GM12878 (cell line): ENCODE measurements at regions of chr14 and their contacts with region 1.

Region 1: DNA sequence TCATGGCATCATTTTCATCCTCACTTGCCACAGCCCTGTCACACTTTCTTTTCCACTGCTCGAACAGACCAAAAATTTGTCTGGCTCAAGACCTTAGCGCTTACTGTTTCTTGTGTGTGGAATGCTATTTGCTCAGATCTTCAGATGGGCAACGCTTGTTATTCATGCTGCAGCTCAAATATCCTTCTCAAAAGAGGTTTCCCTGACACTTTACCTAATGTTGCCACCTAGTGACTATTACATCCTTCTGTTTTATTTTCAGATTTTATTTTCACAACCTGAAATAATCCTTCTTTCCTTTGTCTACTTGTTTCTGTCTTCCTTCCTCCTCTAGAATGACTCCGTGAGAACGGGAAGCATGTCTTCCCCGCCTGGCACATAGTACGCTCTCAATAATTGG is 5.6 kb downstream of the FBXO33 start:
- DNase-seq: no peak
- ATAC-seq: peak; percentile 15
- H3K4me3 ChIP-seq: peak overlapping the region; percentile 45
- H3K27ac ChIP-seq: peak overlapping the region; percentile 55
- H3K4me1 ChIP-seq: peaks cover 13% of the 10 kb centered on the region
- H3K27me3 ChIP-seq: no peaks in the 10 kb centered on the region
- CTCF ChIP-seq: peak; percentile 28 to 53 (median 39); a peak in 4 of 6 replicates
- EP300 ChIP-seq: no peak
- POLR2A ChIP-seq: no peak
- RAD21 ChIP-seq: peak; percentile 65

Region 2: GRCh38 chr14:38808734-38809462 is 617.7 kb before region 1 on chr14:
- CTCF ChIA-PET with region 1: no interaction called
- POLR2A ChIA-PET with region 1: no interaction called
- RAD21 ChIA-PET with region 1: no interaction called
- SMC1A ChIA-PET with region 1: no interaction called
- in situ Hi-C with region 1: no loop called
- intact Hi-C with region 1: no loop called
- DNase-seq: no peak
- ATAC-seq: no peak
- H3K4me3 ChIP-seq: no peak overlapping the region
- H3K27ac ChIP-seq: no peak overlapping the region
- H3K4me1 ChIP-seq: no peaks in the 10 kb centered on the region
- H3K27me3 ChIP-seq: no peaks in the 10 kb centered on the region
- CTCF ChIP-seq: no peak
- EP300 ChIP-seq: no peak
- POLR2A ChIP-seq: no peak
- RAD21 ChIP-seq: no peak

Region 3: GRCh38 chr14:39102969-39103957 is 323.3 kb before region 1 on chr14 and contains the start of gene SEC23A:
- CTCF ChIA-PET with region 1: interaction called, 23 read pairs
- POLR2A ChIA-PET with region 1: interaction called, 4 read pairs
- RAD21 ChIA-PET with region 1: interaction called, 5 read pairs
- SMC1A ChIA-PET with region 1: interaction called, 9 read pairs
- in situ Hi-C with region 1: loop called (anchors 5 kb)
- intact Hi-C with region 1: loop called (anchors 2 kb)
- DNase-seq: no peak
- ATAC-seq: peak; percentile 97
- H3K4me3 ChIP-seq: peak within 1 kb of the TSS; percentile 84
- H3K27ac ChIP-seq: peak within 1 kb of the TSS; percentile 73
- H3K4me1 ChIP-seq: peaks cover 6% of the 10 kb centered on the region; the same call in 1 of the 2 replicates
- H3K27me3 ChIP-seq: no peaks in the 10 kb centered on the region
- CTCF ChIP-seq: no peak
- EP300 ChIP-seq: no peak
- POLR2A ChIP-seq: peak; percentile 98
- RAD21 ChIP-seq: no peak
- polyA plus RNA-seq, gene SEC23A: 13.6 to 15.2 TPM

Region 4: GRCh38 chr14:39232554-39233415 is 193.8 kb before region 1 on chr14:
- CTCF ChIA-PET with region 1: interaction called, 93 read pairs
- POLR2A ChIA-PET with region 1: interaction called, 3 read pairs
- RAD21 ChIA-PET with region 1: interaction called, 22 read pairs
- SMC1A ChIA-PET with region 1: interaction called, 44 read pairs
- in situ Hi-C with region 1: no loop called
- intact Hi-C with region 1: loop called (anchors 1 kb)
- DNase-seq: no peak
- ATAC-seq: peak; percentile 65
- H3K4me3 ChIP-seq: no peak overlapping the region
- H3K27ac ChIP-seq: no peak overlapping the region
- H3K4me1 ChIP-seq: no peaks in the 10 kb centered on the region
- H3K27me3 ChIP-seq: no peaks in the 10 kb centered on the region
- CTCF ChIP-seq: no peak; a peak in 1 of 6 replicates
- EP300 ChIP-seq: no peak
- POLR2A ChIP-seq: no peak
- RAD21 ChIP-seq: 0 out of 2 replicates have a peak, but pooled peaks have one; percentile 19

Region 5: DNA sequence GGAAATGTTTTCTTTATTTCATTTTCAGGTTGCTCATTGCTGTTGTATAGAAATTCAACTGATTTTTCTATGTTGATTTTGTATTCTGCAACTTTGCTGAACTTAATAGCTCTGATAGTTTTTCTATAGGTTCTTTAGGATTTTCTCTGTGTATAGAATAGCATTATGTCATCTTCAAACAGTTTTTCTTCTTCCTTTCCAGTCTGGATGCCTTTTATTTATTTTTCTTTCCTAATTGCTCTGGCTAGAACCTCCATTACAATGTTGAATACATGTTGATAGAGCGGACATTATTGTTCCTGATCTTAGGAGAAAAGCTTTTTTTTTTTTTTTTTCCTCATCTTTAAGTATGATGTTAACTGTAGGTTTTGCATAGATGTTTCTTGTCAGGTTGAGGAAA is 153.7 kb before region 1 on chr14:
- CTCF ChIA-PET with region 1: interaction called, 3 read pairs
- POLR2A ChIA-PET with region 1: interaction called, 4 read pairs
- RAD21 ChIA-PET with region 1: interaction called, 16 read pairs
- SMC1A ChIA-PET with region 1: interaction called, 9 read pairs
- in situ Hi-C with region 1: loop called (anchors 5 kb)
- intact Hi-C with region 1: no loop called
- DNase-seq: no peak
- ATAC-seq: no peak
- H3K4me3 ChIP-seq: no peak overlapping the region
- H3K27ac ChIP-seq: no peak overlapping the region
- H3K4me1 ChIP-seq: peaks cover 5% of the 10 kb centered on the region
- H3K27me3 ChIP-seq: no peaks in the 10 kb centered on the region
- CTCF ChIP-seq: no peak
- EP300 ChIP-seq: no peak
- POLR2A ChIP-seq: no peak
- RAD21 ChIP-seq: no peak

Region 6: DNA sequence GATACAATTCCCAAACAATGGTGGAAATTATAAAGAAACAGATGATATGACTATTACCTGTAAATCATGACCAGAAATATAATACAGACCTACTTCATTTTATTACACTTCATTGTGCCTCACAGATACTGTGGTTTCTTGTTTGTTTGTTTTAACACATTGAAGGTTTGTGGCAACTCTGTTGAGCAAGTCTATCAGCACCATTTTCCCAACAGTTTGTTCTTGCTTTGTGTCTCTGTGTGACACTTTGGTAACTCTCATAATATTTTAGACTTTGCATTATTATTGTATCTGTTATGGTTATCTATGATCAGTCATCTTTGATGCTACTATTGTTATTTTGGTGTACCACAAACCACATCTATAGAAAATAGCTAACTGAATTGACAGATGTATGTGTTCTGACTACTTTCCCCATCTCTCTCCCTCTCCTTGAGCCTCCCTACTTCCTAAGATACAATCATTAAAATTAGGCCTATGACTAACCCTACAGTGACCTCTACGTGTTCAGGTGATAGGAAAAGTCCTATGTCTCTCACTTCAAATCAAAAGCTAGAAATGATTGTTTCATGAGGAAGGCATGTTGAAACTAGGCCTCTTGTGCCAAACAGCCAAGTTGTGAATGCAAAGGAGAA is 43.5 kb before region 1 on chr14:
- CTCF ChIA-PET with region 1: interaction called, 5 read pairs
- POLR2A ChIA-PET with region 1: no interaction called
- RAD21 ChIA-PET with region 1: interaction called, 3 read pairs
- SMC1A ChIA-PET with region 1: interaction called, 16 read pairs
- in situ Hi-C with region 1: no loop called
- intact Hi-C with region 1: no loop called
- DNase-seq: no peak
- ATAC-seq: peak; percentile 75
- H3K4me3 ChIP-seq: no peak overlapping the region
- H3K27ac ChIP-seq: no peak overlapping the region
- H3K4me1 ChIP-seq: no peaks in the 10 kb centered on the region
- H3K27me3 ChIP-seq: no peaks in the 10 kb centered on the region
- CTCF ChIP-seq: no peak
- EP300 ChIP-seq: no peak
- POLR2A ChIP-seq: no peak
- RAD21 ChIP-seq: no peak

Region 7: DNA sequence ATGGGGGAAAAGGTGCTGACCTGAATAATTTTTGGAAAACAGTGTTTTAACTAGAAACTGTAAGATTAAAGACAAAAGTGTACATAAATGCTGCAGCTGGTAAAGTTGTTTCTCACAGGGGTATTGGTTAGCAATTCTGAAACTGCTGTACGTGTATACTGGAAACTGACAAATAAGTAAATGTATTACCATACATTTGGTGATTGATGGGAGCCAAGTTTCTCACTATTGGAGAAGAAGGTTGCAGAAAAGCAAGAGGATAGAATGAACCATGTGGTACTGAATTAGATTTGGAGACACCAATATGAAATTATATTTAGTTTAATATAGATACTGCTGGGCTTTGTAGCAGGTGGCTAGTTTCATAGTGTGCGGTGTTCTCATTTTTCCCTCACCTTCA is 25.2 kb after region 1 on chr14:
- CTCF ChIA-PET with region 1: interaction called, 22 read pairs
- POLR2A ChIA-PET with region 1: interaction called, 159 read pairs
- RAD21 ChIA-PET with region 1: interaction called, 159 read pairs
- SMC1A ChIA-PET with region 1: interaction called, 182 read pairs
- in situ Hi-C with region 1: no loop called
- intact Hi-C with region 1: no loop called
- DNase-seq: no peak
- ATAC-seq: peak; percentile 70
- H3K4me3 ChIP-seq: no peak overlapping the region
- H3K27ac ChIP-seq: peak overlapping the region; percentile 48; the same call in 1 of the 2 replicates
- H3K4me1 ChIP-seq: peaks cover 40% of the 10 kb centered on the region
- H3K27me3 ChIP-seq: no peaks in the 10 kb centered on the region
- CTCF ChIP-seq: no peak
- EP300 ChIP-seq: no peak
- POLR2A ChIP-seq: no peak
- RAD21 ChIP-seq: no peak

Region 8: GRCh38 chr14:39469094-39469710 is 42.6 kb after region 1 on chr14:
- CTCF ChIA-PET with region 1: interaction called, 100 read pairs
- POLR2A ChIA-PET with region 1: interaction called, 18 read pairs
- RAD21 ChIA-PET with region 1: interaction called, 101 read pairs
- SMC1A ChIA-PET with region 1: interaction called, 92 read pairs
- in situ Hi-C with region 1: no loop called
- intact Hi-C with region 1: no loop called
- DNase-seq: no peak
- ATAC-seq: peak; percentile 97
- H3K4me3 ChIP-seq: no peak overlapping the region
- H3K27ac ChIP-seq: no peak overlapping the region
- H3K4me1 ChIP-seq: no peaks in the 10 kb centered on the region
- H3K27me3 ChIP-seq: no peaks in the 10 kb centered on the region
- CTCF ChIP-seq: peak; percentile 76 to 90 (median 78)
- EP300 ChIP-seq: no peak
- POLR2A ChIP-seq: no peak
- RAD21 ChIP-seq: peak; percentile 95

Region 9: DNA sequence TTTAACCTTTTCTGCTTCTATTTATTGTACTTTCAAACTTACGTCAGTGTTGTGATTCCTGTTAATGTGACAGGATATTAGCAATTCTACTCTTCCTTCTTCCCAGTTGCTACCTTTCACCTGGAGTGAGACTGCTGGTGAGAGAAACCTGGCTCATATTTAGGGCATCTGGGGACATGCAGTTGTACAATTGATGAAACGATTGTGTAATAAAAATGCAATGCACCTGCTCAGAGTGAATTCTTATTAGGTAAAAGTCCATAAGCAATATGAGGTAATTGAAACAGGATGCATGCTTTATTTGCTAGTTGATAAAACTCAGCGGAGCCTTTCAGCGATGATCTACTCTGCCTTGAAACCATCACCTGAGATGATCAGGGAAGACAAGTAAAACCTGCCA is 121.8 kb after region 1 on chr14:
- CTCF ChIA-PET with region 1: no interaction called
- POLR2A ChIA-PET with region 1: no interaction called
- RAD21 ChIA-PET with region 1: no interaction called
- SMC1A ChIA-PET with region 1: no interaction called
- in situ Hi-C with region 1: no loop called
- intact Hi-C with region 1: no loop called
- DNase-seq: no peak
- ATAC-seq: no peak
- H3K4me3 ChIP-seq: no peak overlapping the region
- H3K27ac ChIP-seq: no peak overlapping the region
- H3K4me1 ChIP-seq: no peaks in the 10 kb centered on the region
- H3K27me3 ChIP-seq: no peaks in the 10 kb centered on the region
- CTCF ChIP-seq: no peak
- EP300 ChIP-seq: no peak
- POLR2A ChIP-seq: no peak
- RAD21 ChIP-seq: no peak

Region 10: DNA sequence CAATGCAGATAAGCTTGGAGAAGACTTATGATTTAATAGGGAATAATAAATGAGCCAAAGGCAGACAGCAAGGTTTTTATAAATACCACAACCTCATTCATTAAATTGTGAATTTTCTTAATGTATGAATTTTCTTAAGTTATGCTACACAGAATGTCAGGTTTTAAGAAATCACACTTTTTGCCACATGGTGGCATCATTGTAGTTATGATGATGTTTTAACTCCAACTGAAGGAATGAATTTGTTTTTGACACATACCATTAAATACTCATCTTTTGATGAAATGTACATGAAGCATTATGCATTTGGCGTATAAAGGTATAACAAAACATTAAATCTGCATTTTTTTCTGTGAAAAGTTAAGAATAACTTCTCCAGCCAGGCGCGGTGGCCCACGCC is 529.8 kb after region 1 on chr14:
- CTCF ChIA-PET with region 1: no interaction called
- POLR2A ChIA-PET with region 1: no interaction called
- RAD21 ChIA-PET with region 1: no interaction called
- SMC1A ChIA-PET with region 1: no interaction called
- in situ Hi-C with region 1: no loop called
- intact Hi-C with region 1: no loop called
- DNase-seq: no peak
- ATAC-seq: peak; percentile 50
- H3K4me3 ChIP-seq: no peak overlapping the region
- H3K27ac ChIP-seq: no peak overlapping the region
- H3K4me1 ChIP-seq: no peaks in the 10 kb centered on the region
- H3K27me3 ChIP-seq: no peaks in the 10 kb centered on the region
- CTCF ChIP-seq: peak in 2 of 3 experiments; percentile 23 to 36; a peak in 2 of 6 replicates
- EP300 ChIP-seq: no peak
- POLR2A ChIP-seq: no peak
- RAD21 ChIP-seq: peak; percentile 42

Region 11: DNA sequence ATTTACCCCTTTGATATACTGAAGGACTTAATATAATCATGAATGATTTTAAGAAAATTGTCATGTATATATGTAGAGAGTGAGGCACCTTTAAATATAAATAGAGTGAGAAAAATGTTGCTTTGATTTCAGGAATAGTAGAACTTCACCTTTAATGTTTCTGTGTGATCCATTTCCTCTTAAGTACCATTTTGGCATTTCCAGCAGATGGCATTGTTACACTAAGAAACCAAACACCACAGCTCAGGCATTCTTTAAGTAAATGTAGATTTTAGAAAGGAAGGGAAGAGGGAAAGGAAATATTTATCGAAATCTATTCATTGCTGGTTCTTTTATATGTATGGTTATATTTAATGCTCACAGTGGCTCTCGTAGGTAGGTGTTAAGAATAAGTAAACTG is 562.3 kb after region 1 on chr14:
- CTCF ChIA-PET with region 1: no interaction called
- POLR2A ChIA-PET with region 1: no interaction called
- RAD21 ChIA-PET with region 1: no interaction called
- SMC1A ChIA-PET with region 1: no interaction called
- in situ Hi-C with region 1: no loop called
- intact Hi-C with region 1: no loop called
- DNase-seq: no peak
- ATAC-seq: peak; percentile 61; the same call in 2 of the 3 replicates
- H3K4me3 ChIP-seq: no peak overlapping the region
- H3K27ac ChIP-seq: no peak overlapping the region
- H3K4me1 ChIP-seq: no peaks in the 10 kb centered on the region
- H3K27me3 ChIP-seq: no peaks in the 10 kb centered on the region
- CTCF ChIP-seq: peak; percentile 24 to 62 (median 31); a peak in 4 of 6 replicates
- EP300 ChIP-seq: no peak
- POLR2A ChIP-seq: no peak
- RAD21 ChIP-seq: peak; percentile 92